ENCODE measurements at regions of chr19 and their contacts with region 1.

Region 1: DNA sequence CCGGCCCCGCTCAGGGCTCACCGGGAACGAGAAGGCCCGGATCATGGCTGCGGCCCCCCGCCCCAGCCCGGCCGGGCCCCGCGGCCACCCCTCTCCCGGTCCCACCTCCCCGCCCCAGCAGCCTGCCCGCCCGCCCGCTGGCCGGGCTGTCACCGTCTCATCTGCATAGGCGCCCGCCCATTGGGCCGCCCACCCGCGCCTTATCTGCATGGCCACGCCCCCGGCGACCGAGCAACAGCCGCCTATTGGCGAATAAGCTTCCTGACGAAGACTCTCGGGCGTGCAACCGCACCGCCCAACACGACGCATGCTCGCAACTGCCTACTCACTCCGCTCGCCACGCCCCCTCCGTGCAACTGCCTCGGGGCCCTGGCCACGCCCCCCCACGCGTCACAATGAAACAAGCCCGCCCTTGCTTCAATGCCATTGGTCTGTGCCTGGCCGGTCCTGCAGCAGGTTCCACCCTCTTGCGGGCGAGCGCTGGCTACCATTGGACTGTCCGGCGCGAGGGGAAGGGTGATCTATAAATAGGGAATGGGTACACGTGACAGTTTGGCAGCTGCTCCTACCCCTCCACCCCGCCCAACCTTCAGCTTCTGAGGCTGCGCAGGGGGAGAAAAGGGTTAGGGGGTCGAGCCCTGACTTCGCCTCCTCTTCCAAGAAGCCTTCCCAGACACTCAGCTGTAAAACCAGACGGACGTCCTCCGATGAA is at the start of gene DACT3:
- DNase-seq: peak; percentile 100
- H3K4me3 ChIP-seq: peak within 1 kb of the TSS; percentile 23 to 68 (median 29)
- H3K4me3 Mint-ChIP-seq: peak within 1 kb of the TSS; percentile 76 to 95
- H3K27ac ChIP-seq: peak within 1 kb of the TSS; percentile 21 to 82
- H3K27ac Mint-ChIP-seq: peak within 1 kb of the TSS; percentile 83 to 95 (median 91)
- H3K4me1 ChIP-seq: peaks cover 27 to 31% of the 10 kb centered on the region in 2 donors
- H3K4me1 Mint-ChIP-seq: peaks cover 20% of the 10 kb centered on the region
- H3K27me3 ChIP-seq: peaks cover 28 to 29% of the 10 kb centered on the region in 2 donors
- H3K27me3 Mint-ChIP-seq: peaks cover 35 to 56% (median 49%) of the 10 kb centered on the region in 3 donors
- CTCF ChIP-seq: no peak
- polyA plus RNA-seq, gene DACT3: 0.05 to 0.23 (median 0.09) TPM

Region 2: DNA sequence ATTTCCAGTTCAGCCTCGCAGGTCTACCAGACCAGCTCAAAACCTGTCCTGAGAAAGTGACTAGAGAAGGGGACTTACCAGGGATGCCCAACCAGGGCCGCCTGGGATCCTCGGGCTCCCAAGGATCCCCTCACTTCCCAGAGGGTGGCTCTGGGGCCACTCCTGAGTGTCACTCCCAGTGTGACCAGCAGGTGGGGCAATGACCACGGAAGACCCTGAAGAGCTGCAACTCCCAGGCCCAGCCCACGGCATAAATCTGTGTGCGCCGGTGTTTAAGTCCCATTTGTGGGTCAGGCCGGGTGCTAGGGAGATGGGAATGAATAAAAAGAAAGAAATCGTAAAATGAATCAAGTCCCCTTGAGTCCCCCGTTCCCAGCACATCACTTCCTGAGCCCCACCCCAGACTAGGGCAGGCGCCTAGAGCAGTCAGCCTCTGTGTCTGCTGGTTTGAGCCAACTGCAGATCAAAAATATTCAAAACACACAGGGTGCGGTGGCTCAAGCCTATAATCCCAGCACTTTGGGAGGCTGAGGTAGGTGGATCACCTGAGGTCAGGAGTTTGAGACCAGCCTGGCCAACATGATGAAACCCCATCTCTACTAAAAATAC is 47.0 kb before region 1 on chr19:
- intact Hi-C with region 1: loop called (anchors 1 to 5 kb)
- DNase-seq: peak; percentile 73 to 81 (median 76)
- H3K4me3 ChIP-seq: no peak overlapping the region
- H3K4me3 Mint-ChIP-seq: peak overlapping the region in 1 of 2 donors; percentile 65
- H3K27ac ChIP-seq: no peak overlapping the region
- H3K27ac Mint-ChIP-seq: peak overlapping the region in 1 of 7 donors; percentile 47
- H3K4me1 ChIP-seq: peaks cover 49 to 50% of the 10 kb centered on the region in 2 donors
- H3K4me1 Mint-ChIP-seq: peaks cover 50% of the 10 kb centered on the region
- H3K27me3 ChIP-seq: peaks cover 0 to 24% of the 10 kb centered on the region in 2 donors
- H3K27me3 Mint-ChIP-seq: peaks cover 28 to 48% (median 39%) of the 10 kb centered on the region in 3 donors
- CTCF ChIP-seq: peak; percentile 89

Region 3: GRCh38 chr19:46634045-46634655 is 27.0 kb before region 1 on chr19:
- intact Hi-C with region 1: loop called in 1 of 2 experiments (anchors 1 kb)
- DNase-seq: peak; percentile 84 to 96 (median 91)
- H3K4me3 ChIP-seq: peak overlapping the region in 1 of 3 experiments; percentile 68
- H3K4me3 Mint-ChIP-seq: peak overlapping the region; percentile 34 to 75
- H3K27ac ChIP-seq: peak overlapping the region in 1 of 2 donors; percentile 66
- H3K27ac Mint-ChIP-seq: peak overlapping the region; percentile 5 to 89 (median 73)
- H3K4me1 ChIP-seq: peaks cover 39 to 48% of the 10 kb centered on the region in 2 donors
- H3K4me1 Mint-ChIP-seq: peaks cover 33% of the 10 kb centered on the region
- H3K27me3 ChIP-seq: peaks cover 15 to 61% of the 10 kb centered on the region in 2 donors
- H3K27me3 Mint-ChIP-seq: peaks cover 37 to 38% (median 38%) of the 10 kb centered on the region in 3 donors
- CTCF ChIP-seq: no peak

Measured in CD14-positive monocyte (primary cell).